Mammary epithelial cell (primary cell): ENCODE measurements at regions of chr3 and their contacts with region 1.

Region 1: DNA sequence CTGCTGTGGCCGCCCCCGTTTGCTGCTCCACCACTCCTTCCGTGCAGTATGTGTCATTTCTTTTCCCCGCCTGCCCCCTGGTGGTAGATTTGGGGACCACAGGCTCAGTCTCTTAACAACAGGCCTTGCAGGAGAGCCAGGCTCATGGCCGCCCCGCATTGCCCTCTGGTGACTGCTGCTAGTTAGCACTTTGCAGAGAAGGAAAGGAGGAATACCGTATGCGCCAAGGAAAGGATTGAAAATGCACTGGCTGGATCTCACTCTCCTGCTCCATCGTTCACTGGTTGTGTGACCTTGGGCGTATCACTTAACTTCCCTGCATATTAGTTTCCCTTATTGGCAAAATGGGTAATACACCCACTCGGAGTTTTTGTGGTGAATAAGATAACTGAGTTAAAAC is 39.3 kb upstream of the PXYLP1 start:
- DNase-seq: peak; percentile 87
- H3K4me3 ChIP-seq: no peak overlapping the region
- H3K27ac ChIP-seq: no peak overlapping the region
- H3K4me1 ChIP-seq: peaks cover 6% of the 10 kb centered on the region
- H3K27me3 ChIP-seq: peaks cover 7% of the 10 kb centered on the region
- CTCF ChIP-seq: peak; percentile 98 to 99

Region 2: GRCh38 chr3:140898340-140899180 is 293.8 kb before region 1 on chr3:
- CTCF ChIA-PET with region 1: no interaction called
- dilution Hi-C with region 1: no loop called
- in situ Hi-C with region 1: loop called in 1 of 2 experiments (anchors 10 kb)
- intact Hi-C with region 1: loop called (anchors 1 kb)
- DNase-seq: peak; percentile 75
- H3K4me3 ChIP-seq: no peak overlapping the region
- H3K27ac ChIP-seq: no peak overlapping the region
- H3K4me1 ChIP-seq: peaks cover 3% of the 10 kb centered on the region
- H3K27me3 ChIP-seq: peaks cover 2% of the 10 kb centered on the region
- CTCF ChIP-seq: peak; percentile 64 to 68

Region 3: GRCh38 chr3:140922634-140923033 is 269.7 kb before region 1 on chr3:
- CTCF ChIA-PET with region 1: no interaction called
- dilution Hi-C with region 1: no loop called
- in situ Hi-C with region 1: no loop called
- intact Hi-C with region 1: loop called (anchors 1 kb)
- DNase-seq: no peak
- H3K4me3 ChIP-seq: no peak overlapping the region
- H3K27ac ChIP-seq: no peak overlapping the region
- H3K4me1 ChIP-seq: no peaks in the 10 kb centered on the region
- H3K27me3 ChIP-seq: peaks cover 2% of the 10 kb centered on the region
- CTCF ChIP-seq: peak; percentile 26 to 56

Region 4: DNA sequence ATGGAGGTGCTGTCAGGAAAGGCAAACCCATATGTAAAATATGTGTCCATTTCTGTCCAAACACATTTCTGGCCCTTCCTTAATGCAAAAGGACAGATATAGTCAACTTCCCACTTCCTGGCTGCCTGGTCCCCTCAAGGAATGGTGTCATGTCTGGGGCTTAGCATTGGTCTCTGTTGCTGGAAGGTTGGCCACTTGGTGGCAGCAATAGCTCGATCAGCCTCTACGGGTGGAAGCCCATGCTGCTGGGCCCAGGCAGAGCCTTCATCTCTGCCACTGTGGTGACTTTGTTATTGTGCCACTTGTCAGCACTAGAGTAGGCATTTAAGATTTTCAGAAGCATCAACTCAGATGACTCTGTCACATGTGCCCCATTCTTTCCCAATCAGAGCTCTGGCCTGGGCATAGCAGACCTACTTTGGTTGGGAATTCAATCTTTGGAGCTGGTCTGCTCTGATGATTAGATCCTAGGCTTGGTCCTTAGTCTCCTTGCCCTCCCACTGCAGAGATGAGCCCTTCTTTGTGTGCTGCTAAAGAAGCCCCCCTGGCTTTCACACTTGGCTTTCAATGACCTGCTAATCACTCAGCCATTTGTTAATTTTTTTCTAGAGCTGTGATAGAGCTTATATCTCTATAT is 192.2 kb before region 1 on chr3:
- CTCF ChIA-PET with region 1: interaction called, 3 read pairs
- dilution Hi-C with region 1: no loop called
- in situ Hi-C with region 1: loop called (anchors 5 kb)
- intact Hi-C with region 1: loop called (anchors 1 kb)
- DNase-seq: peak; percentile 51
- H3K4me3 ChIP-seq: no peak overlapping the region
- H3K27ac ChIP-seq: no peak overlapping the region
- H3K4me1 ChIP-seq: no peaks in the 10 kb centered on the region
- H3K27me3 ChIP-seq: no peaks in the 10 kb centered on the region
- CTCF ChIP-seq: peak; percentile 66 to 88

Region 5: GRCh38 chr3:141011232-141011996 is 180.9 kb before region 1 on chr3:
- CTCF ChIA-PET with region 1: no interaction called
- dilution Hi-C with region 1: no loop called
- in situ Hi-C with region 1: no loop called
- intact Hi-C with region 1: loop called (anchors 1 kb)
- DNase-seq: peak; percentile 31
- H3K4me3 ChIP-seq: no peak overlapping the region
- H3K27ac ChIP-seq: no peak overlapping the region
- H3K4me1 ChIP-seq: no peaks in the 10 kb centered on the region
- H3K27me3 ChIP-seq: peaks cover 2% of the 10 kb centered on the region
- CTCF ChIP-seq: peak; percentile 85 to 92